Tibial artery (tissue), 4 donors: ENCODE measurements at regions of chr1 and their contacts with region 1.

Region 1: DNA sequence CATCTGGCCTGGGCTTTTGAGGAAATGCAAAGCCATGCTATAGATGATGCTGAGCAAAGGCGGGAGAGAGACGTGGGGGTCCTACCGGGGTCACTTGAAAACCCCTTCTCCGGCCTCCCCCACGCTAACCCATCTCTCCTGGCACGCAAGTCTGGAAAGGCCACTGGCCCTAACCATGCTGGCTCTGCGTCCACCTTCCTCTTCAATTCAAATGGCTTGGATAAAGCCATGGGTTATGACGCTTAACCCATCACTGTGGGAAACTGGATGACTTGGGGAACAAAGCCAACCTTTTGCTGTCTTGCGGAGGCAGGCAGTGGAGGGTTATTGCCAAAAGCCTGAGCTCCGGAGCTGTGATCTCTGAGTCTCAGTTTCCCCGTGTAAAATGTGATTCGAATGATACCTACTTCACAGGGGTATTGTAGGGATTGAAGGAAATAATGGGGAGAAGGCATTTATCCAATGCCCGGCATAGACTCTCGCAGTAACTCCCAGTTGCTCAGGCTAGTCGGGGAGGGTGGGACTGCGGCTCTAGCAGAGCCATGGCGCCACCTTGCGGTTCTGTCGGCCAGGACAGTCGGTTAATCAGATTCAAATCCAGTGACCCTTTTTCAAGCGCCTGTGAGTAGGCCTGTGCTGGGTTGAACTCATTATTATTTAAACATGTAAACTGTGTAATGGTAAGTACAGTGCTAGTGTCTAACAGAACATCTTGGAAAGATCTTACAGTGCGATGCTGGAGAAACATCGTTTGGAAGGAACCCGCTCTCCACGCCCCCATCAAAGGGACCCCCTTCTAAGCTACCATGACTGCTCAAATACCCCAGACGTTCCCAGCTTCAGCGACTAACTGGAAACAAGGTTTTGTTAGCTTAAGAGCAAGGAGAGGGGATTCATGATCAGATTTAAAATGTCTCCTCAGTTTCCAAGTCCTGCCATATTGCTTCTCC is 20.3 kb downstream of the NEK2 start:
- DNase-seq: peak; percentile 88 to 93
- H3K4me3 ChIP-seq: no peak overlapping the region
- H3K27ac ChIP-seq: no peak overlapping the region
- H3K4me1 ChIP-seq: peaks cover 0 to 6% (median 3%) of the 10 kb centered on the region in 4 donors
- H3K27me3 ChIP-seq: no peaks in the 10 kb centered on the region
- CTCF ChIP-seq: peak; percentile 90 to 95

Region 2: GRCh38 chr1:211476200-211476849 is 178.8 kb before region 1 on chr1:
- intact Hi-C with region 1: loop called (anchors 10 kb)
- DNase-seq: peak in 1 of 2 donors; percentile 78
- H3K4me3 ChIP-seq: no peak overlapping the region
- H3K27ac ChIP-seq: no peak overlapping the region
- H3K4me1 ChIP-seq: peaks cover 0 to 10% (median 6%) of the 10 kb centered on the region in 4 donors
- H3K27me3 ChIP-seq: peaks cover 0 to 21% of the 10 kb centered on the region in 2 donors
- CTCF ChIP-seq: peak; percentile 62 to 79

Region 3: DNA sequence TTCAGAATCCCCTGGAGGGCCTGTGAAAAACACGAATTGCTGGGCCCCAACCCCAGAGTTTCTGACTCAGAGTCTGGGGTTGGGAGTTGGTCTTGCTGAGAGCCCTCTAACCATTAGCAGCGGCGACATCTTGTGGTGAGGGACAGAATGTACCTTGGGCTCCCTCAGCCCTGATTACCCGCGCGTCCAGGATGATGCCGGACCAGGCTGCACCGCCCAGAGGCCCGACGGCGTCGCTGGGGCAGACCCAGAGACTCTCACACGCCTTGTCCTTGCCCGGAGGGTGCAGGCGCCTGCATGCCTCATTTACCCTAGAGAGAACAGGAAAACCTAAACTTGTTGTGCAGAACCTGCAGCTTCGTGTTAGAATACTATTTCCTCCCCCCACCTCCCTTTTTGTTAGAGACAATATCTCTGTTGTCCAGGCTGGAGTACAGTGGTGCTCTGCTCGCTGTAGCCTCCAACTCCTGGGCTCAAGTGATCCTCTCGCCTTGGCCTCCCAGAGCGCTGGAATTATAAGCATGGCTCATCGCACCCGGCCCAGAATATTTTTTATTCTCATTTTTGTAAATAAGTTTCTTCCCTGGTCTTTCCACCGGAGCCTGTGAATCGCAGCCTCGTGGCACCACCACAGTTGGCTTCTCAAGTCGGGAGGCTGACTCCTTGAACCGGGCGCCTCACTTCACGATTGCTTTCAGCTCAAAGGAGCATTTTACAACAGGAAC is 140.9 kb before region 1 on chr1:
- intact Hi-C with region 1: loop called (anchors 5 kb)
- DNase-seq: peak; percentile 80 to 88
- H3K4me3 ChIP-seq: no peak overlapping the region
- H3K27ac ChIP-seq: peak overlapping the region in 1 of 2 donors; percentile 36
- H3K4me1 ChIP-seq: peaks cover 0 to 16% (median 9%) of the 10 kb centered on the region in 4 donors
- H3K27me3 ChIP-seq: no peaks in the 10 kb centered on the region
- CTCF ChIP-seq: peak; percentile 72 to 76

Region 4: DNA sequence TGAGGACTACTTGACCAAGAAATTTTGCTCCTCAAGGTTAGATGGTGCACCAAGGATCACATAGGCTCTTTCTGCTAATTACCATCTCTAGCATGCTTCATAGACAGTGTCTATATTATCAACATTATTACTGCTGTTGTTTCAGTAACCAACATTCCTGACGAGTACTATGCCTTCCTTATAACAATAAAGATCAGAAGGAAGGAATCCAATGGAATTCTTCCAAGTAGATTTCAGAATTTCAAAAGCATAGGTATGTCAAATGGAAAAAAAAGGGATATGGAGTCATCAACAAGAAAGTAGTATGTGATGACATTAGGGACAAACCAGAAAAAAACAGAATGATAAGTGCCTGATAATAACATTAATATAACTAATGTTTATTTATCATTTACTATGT is 215.0 kb after region 1 on chr1:
- intact Hi-C with region 1: no loop called
- DNase-seq: no peak
- H3K4me3 ChIP-seq: no peak overlapping the region
- H3K27ac ChIP-seq: no peak overlapping the region
- H3K4me1 ChIP-seq: no peaks in the 10 kb centered on the region
- H3K27me3 ChIP-seq: no peaks in the 10 kb centered on the region
- CTCF ChIP-seq: no peak